ENCODE measurements at regions of chr4 and their contacts with region 1.

Region 1: DNA sequence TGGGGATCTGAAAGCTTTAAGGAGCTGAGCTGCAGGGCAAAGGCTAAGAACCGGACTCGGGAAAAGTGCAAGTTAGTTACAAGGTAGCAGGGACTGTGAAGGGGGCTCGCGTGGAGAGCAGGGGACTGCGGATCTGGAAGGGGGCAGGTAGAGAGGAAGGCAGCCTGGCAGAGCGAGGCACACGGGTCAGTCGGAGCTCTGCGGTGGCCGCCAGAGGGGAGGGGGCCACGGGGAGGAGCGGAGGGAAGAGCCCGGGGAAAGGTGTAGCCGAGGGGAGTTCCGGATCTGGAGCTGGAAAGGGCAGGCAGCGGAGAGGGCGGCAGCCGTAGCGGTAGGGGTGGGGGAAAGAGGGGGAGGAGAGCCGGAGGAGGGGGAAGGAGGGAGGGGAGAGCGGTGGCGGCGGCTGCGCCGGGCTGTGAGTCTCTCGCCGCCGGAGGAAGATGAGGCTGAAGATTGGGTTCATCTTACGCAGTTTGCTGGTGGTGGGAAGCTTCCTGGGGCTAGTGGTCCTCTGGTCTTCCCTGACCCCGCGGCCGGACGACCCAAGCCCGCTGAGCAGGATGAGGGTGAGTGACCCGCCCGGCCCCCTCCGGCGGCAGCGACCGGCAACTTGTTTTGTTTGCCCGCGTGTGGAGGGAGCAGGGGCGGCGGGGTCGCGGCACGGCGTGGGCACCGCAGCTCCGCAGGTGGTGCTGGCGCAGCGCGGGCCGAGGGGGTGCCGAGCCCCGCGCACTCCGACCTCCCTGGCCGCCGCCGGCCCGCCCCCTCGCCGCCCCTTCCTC is at the start of gene GALNT7:
- DNase-seq: peak; percentile 66
- H3K4me3 ChIP-seq: peak within 1 kb of the TSS; percentile 80 to 96 (median 84)
- H3K27ac ChIP-seq: peak within 1 kb of the TSS; percentile 76
- H3K4me1 ChIP-seq: peaks cover 20% of the 10 kb centered on the region
- H3K27me3 ChIP-seq: no peaks in the 10 kb centered on the region
- CTCF ChIP-seq: no peak
- total RNA-seq, gene GALNT7: 13.5 to 17.0 TPM

Region 2: GRCh38 chr4:172892300-172892699 is 276.3 kb before region 1 on chr4:
- CTCF ChIA-PET with region 1: interaction called, 7 read pairs
- dilution Hi-C with region 1: no loop called
- in situ Hi-C with region 1: no loop called
- intact Hi-C with region 1: loop called (anchors 2 kb)
- DNase-seq: peak; percentile 25
- H3K4me3 ChIP-seq: no peak overlapping the region
- H3K27ac ChIP-seq: no peak overlapping the region
- H3K4me1 ChIP-seq: no peaks in the 10 kb centered on the region
- H3K27me3 ChIP-seq: no peaks in the 10 kb centered on the region
- CTCF ChIP-seq: peak; percentile 93 to 94

Region 3: GRCh38 chr4:173025131-173025530 is 143.5 kb before region 1 on chr4:
- CTCF ChIA-PET with region 1: no interaction called
- dilution Hi-C with region 1: no loop called
- in situ Hi-C with region 1: no loop called
- intact Hi-C with region 1: loop called (anchors 1 kb)
- DNase-seq: peak; percentile 58
- H3K4me3 ChIP-seq: no peak overlapping the region
- H3K27ac ChIP-seq: no peak overlapping the region
- H3K4me1 ChIP-seq: no peaks in the 10 kb centered on the region
- H3K27me3 ChIP-seq: no peaks in the 10 kb centered on the region
- CTCF ChIP-seq: peak; percentile 62 to 79

Region 4: GRCh38 chr4:173211838-173212237 is 43.3 kb after region 1 on chr4:
- CTCF ChIA-PET with region 1: no interaction called
- dilution Hi-C with region 1: loop called (anchors 5 kb)
- in situ Hi-C with region 1: no loop called
- intact Hi-C with region 1: loop called (anchors 5 kb)
- DNase-seq: peak; percentile 87
- H3K4me3 ChIP-seq: no peak overlapping the region
- H3K27ac ChIP-seq: peak overlapping the region; percentile 68
- H3K4me1 ChIP-seq: peaks cover 54% of the 10 kb centered on the region
- H3K27me3 ChIP-seq: no peaks in the 10 kb centered on the region
- CTCF ChIP-seq: no peak

Region 5: DNA sequence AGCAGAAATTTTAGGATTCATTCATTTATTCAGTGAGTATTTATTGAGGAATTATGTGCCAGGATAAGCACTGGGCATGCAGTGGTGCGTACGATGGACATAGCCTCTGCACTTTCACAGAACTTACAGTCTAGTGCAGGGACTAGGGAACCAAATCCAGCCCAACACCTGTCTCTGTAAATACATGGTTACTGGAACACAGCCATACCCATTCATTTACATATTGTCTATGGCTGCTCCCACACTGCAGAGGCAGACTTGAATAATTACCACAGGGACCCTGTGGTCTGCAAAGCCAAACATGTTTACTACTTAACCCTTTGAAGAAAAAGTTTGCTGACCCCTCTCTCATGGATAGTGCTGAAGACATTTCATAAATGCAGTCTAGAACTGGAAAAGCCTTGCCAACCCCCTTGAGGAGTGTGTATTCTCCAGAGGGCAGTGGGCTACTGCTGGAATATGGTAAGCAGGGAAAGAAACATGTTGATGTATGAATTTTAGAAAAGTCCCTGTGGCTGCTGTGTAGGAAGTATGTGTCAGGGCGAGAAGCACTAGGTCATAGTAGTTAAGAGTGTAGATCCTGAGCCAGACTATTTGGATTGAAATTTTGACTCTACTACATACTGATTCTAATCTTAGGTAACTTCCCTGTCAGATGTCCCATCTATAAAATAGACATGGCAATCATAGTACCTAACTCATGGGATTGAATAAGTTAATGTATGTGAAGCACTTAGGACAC is 75.5 kb after region 1 on chr4:
- CTCF ChIA-PET with region 1: no interaction called
- dilution Hi-C with region 1: loop called (anchors 10 kb)
- in situ Hi-C with region 1: no loop called
- intact Hi-C with region 1: no loop called
- DNase-seq: no peak
- H3K4me3 ChIP-seq: no peak overlapping the region
- H3K27ac ChIP-seq: no peak overlapping the region
- H3K4me1 ChIP-seq: peaks cover 21% of the 10 kb centered on the region
- H3K27me3 ChIP-seq: no peaks in the 10 kb centered on the region
- CTCF ChIP-seq: no peak

Measured in mammary epithelial cell (primary cell).